ENCODE measurements at regions of chr13 and their contacts with region 1.

Region 1: DNA sequence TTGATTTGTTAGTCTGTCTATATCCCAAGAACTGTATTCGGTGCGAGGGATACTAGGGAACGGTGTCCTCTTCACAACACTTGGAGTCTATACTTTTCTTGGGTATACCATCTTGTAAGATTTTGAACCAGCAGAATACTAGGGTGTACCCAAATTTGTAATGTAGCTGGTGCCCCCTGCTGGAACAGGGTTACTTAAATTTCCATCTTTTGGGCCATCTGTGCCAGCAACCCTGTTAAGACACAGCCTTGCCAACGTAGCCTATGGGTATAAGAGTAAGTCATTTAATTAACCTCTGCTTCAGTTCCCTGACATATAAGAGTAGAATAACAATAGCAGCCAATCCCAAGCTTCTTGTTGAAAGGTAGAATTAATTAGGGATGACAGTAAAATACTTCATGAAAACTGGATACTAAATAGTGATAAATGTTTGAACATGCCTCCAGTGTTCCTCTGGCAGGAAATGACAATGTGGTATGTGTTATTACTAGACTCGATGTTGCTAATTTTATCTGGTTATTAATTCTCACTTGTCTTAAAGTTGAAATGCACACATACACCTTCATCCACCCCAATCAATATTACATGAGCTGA is 607.6 kb downstream of the FGF9 start:
- DNase-seq: peak; percentile 79
- ATAC-seq: peak; percentile 68
- H3K4me3 Mint-ChIP-seq: no peak overlapping the region
- H3K27ac Mint-ChIP-seq: no peak overlapping the region
- H3K4me1 Mint-ChIP-seq: peaks cover 6% of the 10 kb centered on the region
- H3K27me3 Mint-ChIP-seq: no peaks in the 10 kb centered on the region

Region 2: DNA sequence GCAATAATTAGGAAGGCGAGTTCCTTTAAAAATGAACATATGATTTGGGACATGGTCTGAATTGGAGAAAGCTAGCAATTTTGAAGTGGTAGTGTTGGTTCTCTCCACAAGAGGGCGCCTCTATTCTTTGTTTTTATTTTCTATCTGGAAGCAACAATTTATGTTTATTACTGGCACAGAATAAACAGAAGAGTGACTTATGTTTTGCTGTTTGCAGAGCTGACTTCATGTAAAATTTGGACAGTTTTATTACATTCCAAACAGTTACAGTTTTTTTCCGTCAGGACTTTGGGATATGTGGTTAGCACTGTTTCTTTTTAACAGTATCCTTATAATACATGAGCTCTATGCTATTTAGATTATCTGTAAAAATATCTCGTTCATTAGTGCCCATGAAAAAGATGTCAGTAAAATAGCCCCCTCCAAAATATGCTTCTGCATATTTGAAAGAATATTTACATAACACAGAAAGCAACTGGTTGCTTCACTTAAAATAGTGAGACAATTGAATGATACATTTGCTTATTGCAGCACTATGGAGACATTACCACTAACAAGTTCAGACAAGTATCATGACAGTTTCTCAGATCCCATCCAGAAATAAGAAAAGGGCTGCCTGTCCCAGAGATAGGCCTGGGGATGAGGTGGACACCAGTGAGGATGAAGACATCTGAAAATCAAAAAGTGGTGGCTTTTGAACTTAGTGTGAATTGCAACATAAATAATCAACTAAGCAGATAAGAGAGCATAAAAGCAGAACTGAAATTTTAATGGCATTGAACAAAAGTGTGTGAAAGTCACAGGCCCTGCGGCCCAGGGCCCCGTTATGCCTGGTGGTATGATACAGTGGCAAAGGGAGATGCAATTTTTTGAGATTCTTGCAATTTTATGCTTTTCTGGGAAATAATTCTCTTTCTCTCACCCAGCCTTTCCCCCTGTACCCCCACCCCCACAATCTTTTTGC is 639.8 kb before region 1 on chr13:
- CTCF ChIA-PET with region 1: interaction called, 3 read pairs
- POLR2A ChIA-PET with region 1: no interaction called
- intact Hi-C with region 1: loop called (anchors 1 to 2 kb)
- DNase-seq: peak; percentile 39
- ATAC-seq: no peak
- H3K4me3 Mint-ChIP-seq: no peak overlapping the region
- H3K27ac Mint-ChIP-seq: no peak overlapping the region
- H3K4me1 Mint-ChIP-seq: no peaks in the 10 kb centered on the region
- H3K27me3 Mint-ChIP-seq: peaks cover 2% of the 10 kb centered on the region

Region 3: DNA sequence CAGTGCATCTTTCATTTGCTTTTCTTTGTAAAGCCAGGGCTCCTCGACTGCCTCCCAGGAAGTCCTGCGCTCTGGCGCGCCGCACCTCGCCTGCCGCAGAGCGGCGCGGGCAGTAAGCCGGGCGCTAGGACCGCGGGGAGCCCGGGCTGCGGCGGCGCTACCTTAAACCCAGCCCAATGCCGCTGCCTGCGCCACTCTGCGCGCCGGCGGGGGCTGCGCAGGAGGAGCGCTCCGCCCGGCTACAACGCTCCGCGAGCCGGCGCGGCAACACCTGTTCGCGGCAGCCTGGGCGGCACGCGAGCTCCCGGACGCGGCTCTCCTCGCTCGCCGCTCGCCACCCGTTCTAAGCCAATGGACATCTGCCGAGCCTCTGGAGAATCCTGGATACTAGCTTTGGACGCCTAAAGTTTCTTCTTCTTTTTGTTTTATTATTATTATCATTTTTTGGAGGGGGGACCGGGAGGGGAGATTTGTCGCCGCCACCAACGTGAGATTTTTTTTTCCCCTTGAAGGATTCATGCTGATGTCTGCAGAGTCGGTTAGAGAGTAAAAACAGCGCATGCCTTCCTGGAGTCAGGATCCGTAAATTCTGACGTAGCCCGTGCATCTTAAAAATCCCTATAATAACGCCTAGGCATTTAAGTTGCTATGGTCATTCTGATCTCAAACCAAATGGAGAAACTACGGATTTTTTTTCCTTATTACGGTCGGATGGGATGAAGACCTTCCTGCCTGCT is 607.4 kb before region 1 on chr13 and contains the start of gene FGF9:
- CTCF ChIA-PET with region 1: no interaction called
- POLR2A ChIA-PET with region 1: no interaction called
- intact Hi-C with region 1: no loop called
- DNase-seq: peak; percentile 88
- ATAC-seq: peak; percentile 78
- H3K4me3 Mint-ChIP-seq: peak within 1 kb of the TSS; percentile 76
- H3K27ac Mint-ChIP-seq: peak within 1 kb of the TSS; percentile 53
- H3K4me1 Mint-ChIP-seq: peaks cover 45% of the 10 kb centered on the region
- H3K27me3 Mint-ChIP-seq: peaks cover 43% of the 10 kb centered on the region
- total RNA-seq, gene FGF9: 0.19 TPM in 1 of 2 experiments, not detected in the other

Region 4: DNA sequence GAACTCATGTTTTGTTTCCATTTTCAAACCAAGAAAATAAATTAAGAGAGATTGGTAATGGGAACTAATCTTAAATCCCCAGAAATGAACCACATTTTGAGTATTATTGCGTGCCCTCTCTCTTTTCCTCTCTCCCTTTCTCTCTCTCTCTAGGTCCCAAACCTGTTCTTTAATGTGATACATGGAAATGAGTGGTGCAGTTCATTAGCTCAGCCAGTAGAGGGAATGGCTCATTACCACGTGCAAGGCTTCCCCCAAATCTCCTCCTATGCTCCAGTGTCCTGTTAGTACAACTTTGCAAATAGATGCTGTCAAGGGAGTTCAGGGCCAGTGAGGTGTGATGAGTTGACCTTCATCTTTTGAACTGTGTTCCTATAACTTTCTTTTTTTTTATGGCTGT is 429.1 kb before region 1 on chr13:
- CTCF ChIA-PET with region 1: no interaction called
- POLR2A ChIA-PET with region 1: no interaction called
- intact Hi-C with region 1: loop called in 1 of 2 experiments (anchors 1 kb)
- DNase-seq: peak; percentile 24
- ATAC-seq: peak; percentile 64
- H3K4me3 Mint-ChIP-seq: no peak overlapping the region
- H3K27ac Mint-ChIP-seq: no peak overlapping the region
- H3K4me1 Mint-ChIP-seq: no peaks in the 10 kb centered on the region
- H3K27me3 Mint-ChIP-seq: peaks cover 7% of the 10 kb centered on the region

Region 5: GRCh38 chr13:21913010-21913409 is 365.4 kb before region 1 on chr13:
- CTCF ChIA-PET with region 1: no interaction called
- POLR2A ChIA-PET with region 1: no interaction called
- intact Hi-C with region 1: loop called (anchors 2 to 5 kb)
- DNase-seq: peak; percentile 22
- ATAC-seq: no peak
- H3K4me3 Mint-ChIP-seq: no peak overlapping the region
- H3K27ac Mint-ChIP-seq: no peak overlapping the region
- H3K4me1 Mint-ChIP-seq: no peaks in the 10 kb centered on the region
- H3K27me3 Mint-ChIP-seq: peaks cover 2% of the 10 kb centered on the region

Measured in activated CD4-positive, alpha-beta T cell treated with anti-CD3 and anti-CD28 coated beads for 36 hours (primary cell).